Breast epithelium (tissue), 4 donors: ENCODE measurements at regions of chr5 and their contacts with region 1.

Region 1: GRCh38 chr5:6868171-6868570 is 154.9 kb downstream of the TENT4A start:
- DNase-seq: no peak
- H3K4me3 ChIP-seq: no peak overlapping the region
- H3K27ac ChIP-seq: no peak overlapping the region
- H3K4me1 ChIP-seq: no peaks in the 10 kb centered on the region
- H3K27me3 ChIP-seq: no peaks in the 10 kb centered on the region
- CTCF ChIP-seq: no peak
- POLR2A ChIP-seq: no peak

Region 2: DNA sequence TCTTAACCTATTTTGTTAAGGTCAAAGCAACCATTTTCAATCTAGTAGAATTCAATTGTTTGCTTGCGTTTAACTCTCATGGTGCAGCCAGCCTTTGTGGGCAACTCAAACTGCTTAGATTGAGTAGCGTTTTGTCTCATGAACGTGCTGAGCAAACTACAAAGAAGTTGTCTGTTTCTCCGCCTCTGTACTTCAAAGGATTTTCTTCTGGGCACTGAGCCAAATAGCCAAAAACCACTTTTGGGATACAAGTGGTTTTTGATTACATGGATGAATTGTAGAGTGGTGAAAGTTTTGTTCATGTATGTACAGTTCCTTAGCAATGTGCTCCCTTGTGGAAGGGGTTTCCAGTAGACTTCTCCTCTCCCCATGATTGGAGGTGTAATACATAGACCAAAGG is 859.9 kb after region 1 on chr5:
- intact Hi-C with region 1: loop called (anchors 5 kb)
- DNase-seq: no peak
- H3K4me3 ChIP-seq: no peak overlapping the region
- H3K27ac ChIP-seq: no peak overlapping the region
- H3K4me1 ChIP-seq: no peaks in the 10 kb centered on the region
- H3K27me3 ChIP-seq: no peaks in the 10 kb centered on the region
- CTCF ChIP-seq: no peak
- POLR2A ChIP-seq: no peak